ENCODE measurements at regions of chr14 and their contacts with region 1.

Region 1: DNA sequence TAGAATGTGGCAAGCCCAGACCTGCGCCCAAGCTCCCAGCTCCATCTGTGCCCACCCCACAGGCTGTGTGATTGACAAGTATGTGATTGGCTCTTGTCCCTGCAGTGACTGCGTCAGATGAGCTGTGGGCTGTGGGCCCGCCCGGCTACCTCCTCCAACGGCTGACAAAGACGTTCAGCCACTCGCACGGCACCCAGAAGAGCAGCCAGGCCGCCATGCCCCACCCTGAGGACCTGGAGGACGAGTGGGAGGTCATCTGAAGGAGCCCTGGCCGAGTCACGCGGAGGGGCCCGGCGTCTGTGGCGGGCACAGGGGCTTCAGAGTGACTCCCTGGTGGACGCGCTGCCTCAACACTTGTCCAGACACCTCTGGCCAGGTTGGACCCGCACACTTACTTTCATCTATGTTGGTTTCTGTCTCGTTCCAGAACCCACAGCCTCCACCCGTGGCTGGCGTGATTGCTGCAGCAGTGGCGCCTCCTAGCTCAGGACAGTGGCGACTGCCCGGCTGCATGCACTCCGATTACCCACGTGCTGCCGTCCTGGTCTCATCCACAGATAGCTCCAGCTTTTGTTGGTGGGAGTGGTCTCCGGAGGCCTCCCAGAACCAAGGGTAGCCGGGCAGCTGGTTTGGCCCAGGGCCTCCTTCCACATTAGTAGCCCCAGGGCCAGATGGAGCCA is 11.4 kb downstream of the ANKRD9 start:
- DNase-seq: no peak
- ATAC-seq: peak in 1 of 4 donors; percentile 1
- H3K4me3 ChIP-seq: no peak overlapping the region
- H3K27ac ChIP-seq: peak overlapping the region in 9 of 12 donors; percentile 41 to 98 (median 89)
- H3K4me1 ChIP-seq: peaks cover 0 to 48% (median 24%) of the 10 kb centered on the region in 12 donors
- H3K27me3 ChIP-seq: no peaks in the 10 kb centered on the region
- CTCF ChIP-seq: peak in 5 of 12 donors; percentile 7 to 16 (median 16)
- POLR2A ChIP-seq: no peak

Region 2: GRCh38 chr14:102403028-102403427 is 95.1 kb before region 1 on chr14:
- intact Hi-C with region 1: no loop called
- DNase-seq: no peak
- ATAC-seq: no peak
- H3K4me3 ChIP-seq: no peak overlapping the region
- H3K27ac ChIP-seq: no peak overlapping the region
- H3K4me1 ChIP-seq: peaks cover 0 to 10% (median under 1%) of the 10 kb centered on the region in 12 donors
- H3K27me3 ChIP-seq: no peaks in the 10 kb centered on the region
- CTCF ChIP-seq: no peak
- POLR2A ChIP-seq: no peak

Region 3: GRCh38 chr14:102451061-102451350 is 47.1 kb before region 1 on chr14:
- intact Hi-C with region 1: loop called in 2 of 10 experiments (anchors 2 kb)
- DNase-seq: peak in 2 of 5 donors; percentile 34 to 39
- ATAC-seq: peak; percentile 61 to 94 (median 84)
- H3K4me3 ChIP-seq: no peak overlapping the region
- H3K27ac ChIP-seq: peak overlapping the region in 8 of 12 donors; percentile 35 to 80 (median 52)
- H3K4me1 ChIP-seq: peaks cover 0 to 8% (median 0%) of the 10 kb centered on the region in 12 donors
- H3K27me3 ChIP-seq: no peaks in the 10 kb centered on the region
- CTCF ChIP-seq: no peak
- POLR2A ChIP-seq: no peak

Region 4: GRCh38 chr14:102819176-102819628 is 321.1 kb after region 1 on chr14:
- intact Hi-C with region 1: no loop called
- DNase-seq: no peak
- ATAC-seq: no peak
- H3K4me3 ChIP-seq: no peak overlapping the region
- H3K27ac ChIP-seq: no peak overlapping the region
- H3K4me1 ChIP-seq: peaks cover 0 to 8% (median 0%) of the 10 kb centered on the region in 12 donors
- H3K27me3 ChIP-seq: no peaks in the 10 kb centered on the region
- CTCF ChIP-seq: no peak
- POLR2A ChIP-seq: no peak

Measured in heart left ventricle (tissue), 16 donors.